GM10248 (cell line): ENCODE measurements at regions of chr17 and their contacts with region 1.

Region 1: DNA sequence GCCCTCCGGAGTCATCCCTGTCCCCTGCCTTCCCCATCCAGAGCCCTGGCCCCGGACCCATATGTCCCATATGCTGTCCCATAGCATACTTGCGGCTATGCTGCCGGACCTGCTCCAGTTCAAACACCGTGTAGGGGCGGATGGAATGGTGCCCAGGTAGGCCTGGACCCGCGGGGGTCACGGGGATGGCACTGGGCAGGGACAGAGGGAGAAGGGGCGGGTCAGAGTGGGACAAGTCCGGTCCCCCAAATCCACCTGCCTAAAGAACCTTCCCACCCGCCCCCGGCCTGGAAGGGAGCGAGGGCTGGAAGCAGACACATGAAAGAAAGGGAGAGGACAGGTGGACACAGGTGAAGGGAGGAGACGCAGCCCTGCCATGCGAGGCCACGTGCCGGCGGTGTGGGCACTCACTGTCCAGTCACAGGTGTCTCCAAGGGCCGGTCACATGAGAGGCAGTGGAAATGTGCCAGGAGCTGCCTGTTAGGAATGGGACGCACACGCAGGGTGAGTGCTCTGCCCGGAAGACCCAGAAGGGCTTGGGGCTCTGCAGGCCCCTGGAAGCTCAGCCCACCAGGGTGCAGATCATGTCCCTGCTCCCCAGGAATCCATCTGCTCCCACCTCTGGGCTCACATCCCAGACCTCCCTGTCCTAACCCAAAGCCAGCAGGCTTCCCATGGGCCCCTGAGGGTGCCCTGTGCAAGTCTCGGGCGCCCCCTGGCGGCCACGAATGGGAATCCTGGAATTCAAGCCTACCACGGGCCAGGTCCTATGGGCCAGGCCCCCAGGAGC is 14.0 kb downstream of the UBALD2 start:
- DNase-seq: peak; percentile 90
- CTCF ChIP-seq: peak; percentile 92

Region 2: GRCh38 chr17:76103274-76104139 is 175.6 kb before region 1 on chr17 and contains the start of gene EXOC7:
- CTCF ChIA-PET with region 1: interaction called, 17 read pairs
- POLR2A ChIA-PET with region 1: interaction called, 3 read pairs
- DNase-seq: peak; percentile 99
- CTCF ChIP-seq: no peak

Region 3: GRCh38 chr17:76153640-76154039 is 125.5 kb before region 1 on chr17:
- CTCF ChIA-PET with region 1: interaction called, 16 read pairs
- POLR2A ChIA-PET with region 1: no interaction called
- DNase-seq: no peak
- CTCF ChIP-seq: no peak

Region 4: DNA sequence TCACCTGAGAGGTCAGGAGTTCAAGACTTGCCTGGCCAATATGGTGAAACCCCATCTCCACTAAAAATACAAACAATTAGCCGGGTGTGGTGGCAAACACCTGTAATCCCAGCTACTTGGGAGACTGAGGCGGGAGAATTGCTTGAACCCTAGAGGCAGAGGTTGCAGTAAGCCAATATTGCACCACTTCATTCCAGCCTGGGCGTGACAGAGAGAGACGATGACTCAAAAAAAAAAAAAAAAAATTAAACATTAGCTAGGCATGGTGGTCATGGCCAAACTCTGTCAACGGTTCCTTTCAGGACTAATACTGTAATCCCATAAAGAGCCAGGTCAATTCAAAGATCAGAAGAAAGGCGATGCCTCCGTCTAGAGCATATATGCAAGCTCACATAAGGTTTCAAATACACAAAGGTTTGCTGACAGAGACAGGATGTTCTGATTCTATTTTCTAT is 41.3 kb before region 1 on chr17:
- CTCF ChIA-PET with region 1: interaction called, 11 read pairs
- POLR2A ChIA-PET with region 1: interaction called, 3 read pairs
- DNase-seq: no peak
- CTCF ChIP-seq: no peak

Region 5: DNA sequence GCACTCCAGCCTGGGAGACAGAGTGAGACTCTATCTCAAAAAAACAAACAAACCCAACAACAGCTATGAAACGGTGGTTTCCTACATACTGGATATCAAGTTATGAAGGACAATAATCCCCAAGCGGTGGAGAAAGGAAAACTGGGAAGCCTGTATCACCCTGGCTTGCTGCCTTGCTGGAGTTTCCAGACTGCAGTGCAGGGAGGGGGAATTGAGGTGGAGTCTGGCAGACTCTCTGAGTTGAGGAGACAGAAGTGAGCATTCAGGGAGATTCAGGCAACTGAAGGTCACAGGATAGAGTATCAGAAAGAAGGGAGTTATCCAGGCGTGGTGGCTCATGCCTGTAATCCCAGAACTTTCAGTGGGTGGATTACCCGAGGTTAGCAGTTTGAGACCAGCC is 17.0 kb after region 1 on chr17:
- CTCF ChIA-PET with region 1: interaction called, 71 read pairs
- POLR2A ChIA-PET with region 1: no interaction called
- DNase-seq: no peak
- CTCF ChIP-seq: no peak

Region 6: DNA sequence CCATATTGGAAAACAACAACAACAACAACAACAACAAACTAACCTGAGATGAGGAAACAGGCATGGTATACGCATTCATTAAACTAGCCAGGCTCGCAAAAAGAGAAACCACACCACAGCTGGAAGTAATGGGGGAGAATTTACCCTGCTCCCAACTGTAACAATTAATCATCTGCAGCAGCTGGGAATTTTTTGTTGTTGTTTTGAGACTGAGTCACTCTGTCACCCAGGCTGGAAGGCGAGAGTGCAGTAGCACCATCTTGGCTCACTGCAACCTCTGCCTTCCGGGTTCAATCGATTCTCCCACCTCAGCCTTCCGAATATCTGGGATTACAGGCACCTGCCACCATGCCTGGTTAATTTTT is 58.2 kb after region 1 on chr17:
- CTCF ChIA-PET with region 1: no interaction called
- POLR2A ChIA-PET with region 1: no interaction called
- DNase-seq: no peak
- CTCF ChIP-seq: no peak